Heart left ventricle (tissue), 16 donors: ENCODE measurements at regions of chr2 and their contacts with region 1.

Region 1: GRCh38 chr2:27890146-27890923 is at the starts of genes BABAM2 and RBKS:
- DNase-seq: peak; percentile 87 to 93 (median 91)
- ATAC-seq: peak; percentile 87 to 98 (median 94)
- H3K4me3 ChIP-seq: peak within 1 kb of the TSS; percentile 57 to 94 (median 80)
- H3K27ac ChIP-seq: peak within 1 kb of the TSS; percentile 85 to 99 (median 94)
- H3K4me1 ChIP-seq: peaks cover 0 to 54% (median 22%) of the 10 kb centered on the region in 12 donors
- H3K27me3 ChIP-seq: no peaks in the 10 kb centered on the region
- CTCF ChIP-seq: peak in 1 of 12 donors; percentile 9
- POLR2A ChIP-seq: peak in 1 of 2 donors; percentile 72
- total RNA-seq, gene BABAM2: 55.1 to 75.1 (median 64.4) TPM
- total RNA-seq, gene RBKS: 2.0 to 6.0 (median 4.1) TPM

Region 2: GRCh38 chr2:27421028-27421427 is 469.3 kb before region 1 on chr2:
- intact Hi-C with region 1: no loop called
- DNase-seq: no peak
- ATAC-seq: no peak
- H3K4me3 ChIP-seq: no peak overlapping the region
- H3K27ac ChIP-seq: no peak overlapping the region
- H3K4me1 ChIP-seq: no peaks in the 10 kb centered on the region
- H3K27me3 ChIP-seq: no peaks in the 10 kb centered on the region
- CTCF ChIP-seq: no peak
- POLR2A ChIP-seq: no peak

Region 3: GRCh38 chr2:27715318-27716210 is 174.8 kb before region 1 on chr2:
- intact Hi-C with region 1: loop called in 3 of 10 experiments (anchors 5 to 10 kb)
- DNase-seq: peak; percentile 84 to 90 (median 85)
- ATAC-seq: peak; percentile 78 to 90 (median 88)
- H3K4me3 ChIP-seq: peak overlapping the region; percentile 19 to 60 (median 52)
- H3K27ac ChIP-seq: peak overlapping the region; percentile 85 to 100 (median 92)
- H3K4me1 ChIP-seq: peaks cover 0 to 55% (median 24%) of the 10 kb centered on the region in 12 donors
- H3K27me3 ChIP-seq: peaks cover 0 to 8% (median 0%) of the 10 kb centered on the region in 9 donors
- CTCF ChIP-seq: no peak
- POLR2A ChIP-seq: peak; percentile 64 to 90

Region 4: DNA sequence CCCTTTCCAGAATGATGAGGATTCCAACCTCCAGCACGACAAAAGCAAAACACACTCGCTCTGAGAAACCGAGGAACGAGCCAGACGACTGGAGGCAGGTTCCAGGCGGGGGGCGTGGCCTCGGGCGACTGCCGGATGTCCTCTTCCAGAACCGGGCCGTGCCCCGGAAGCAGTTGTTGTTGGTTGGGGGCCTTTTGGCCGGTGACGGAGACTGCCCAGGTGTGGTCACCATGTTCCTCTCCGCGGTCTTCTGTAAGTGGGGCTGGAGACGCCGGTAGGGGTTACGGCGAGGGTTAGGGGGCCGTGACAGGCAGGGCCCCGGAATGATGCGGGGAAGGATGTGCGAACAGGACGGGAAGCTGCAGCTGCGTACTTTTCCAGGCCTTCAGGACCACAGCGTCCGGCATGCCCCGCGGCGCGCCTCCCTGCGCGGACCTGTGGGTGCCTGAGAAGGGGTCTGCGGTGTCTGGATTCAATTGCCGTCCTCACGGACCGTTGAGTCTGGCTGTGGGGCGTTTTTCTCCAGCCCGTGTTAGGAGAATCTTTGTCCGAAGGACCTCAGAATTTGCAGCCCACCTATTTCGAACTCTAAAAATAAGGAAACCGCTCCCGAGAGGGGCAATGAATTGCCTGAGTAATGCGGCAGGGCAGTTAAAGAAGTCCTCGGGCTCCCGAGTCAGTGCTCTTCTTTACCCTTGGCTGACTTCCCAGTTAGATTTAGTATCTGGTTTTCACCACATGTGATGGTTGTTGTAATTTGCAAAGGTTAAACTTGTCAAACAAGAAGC is 118.6 kb before region 1 on chr2 and contains the start of gene MRPL33:
- intact Hi-C with region 1: loop called in 4 of 10 experiments (anchors 1 to 10 kb)
- DNase-seq: peak; percentile 96 to 98 (median 96)
- ATAC-seq: peak; percentile 95 to 98 (median 98)
- H3K4me3 ChIP-seq: peak within 1 kb of the TSS; percentile 56 to 89 (median 76)
- H3K27ac ChIP-seq: peak within 1 kb of the TSS; percentile 88 to 97 (median 92)
- H3K4me1 ChIP-seq: peaks cover 4 to 50% (median 37%) of the 10 kb centered on the region in 12 donors
- H3K27me3 ChIP-seq: no peaks in the 10 kb centered on the region
- CTCF ChIP-seq: no peak
- POLR2A ChIP-seq: peak in 1 of 2 donors; percentile 61
- total RNA-seq, gene MRPL33: 163 to 503 (median 305) TPM

Region 5: DNA sequence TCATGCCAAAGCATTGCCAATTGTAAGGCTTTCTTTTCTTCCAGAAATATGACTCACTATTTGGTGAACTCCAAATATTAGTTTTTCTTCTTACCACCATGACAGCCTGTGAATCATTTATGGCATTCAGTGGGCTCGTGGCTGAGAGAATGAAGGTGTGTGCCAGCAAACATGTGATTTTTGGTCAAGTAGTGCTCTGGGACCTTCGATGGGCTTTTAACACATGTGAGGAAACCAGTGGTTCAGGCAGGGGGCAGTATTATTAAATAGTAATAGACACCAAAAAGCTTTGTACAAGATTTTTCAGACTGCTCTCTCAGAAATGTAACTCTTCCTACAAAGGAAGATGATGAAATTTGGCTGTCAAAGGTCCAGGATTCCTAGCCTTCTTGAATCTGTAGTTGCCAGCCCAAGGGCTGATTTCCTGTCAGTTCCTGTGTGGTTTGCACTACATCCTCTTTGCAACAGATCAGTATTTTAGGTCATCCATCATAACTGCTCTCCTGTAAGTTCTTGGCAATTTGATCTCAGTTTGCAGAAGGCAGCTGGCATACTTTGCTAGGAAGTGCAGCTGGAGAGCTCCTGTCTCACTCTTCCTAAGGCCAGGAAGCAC is 64.5 kb after region 1 on chr2:
- intact Hi-C with region 1: loop called in 2 of 10 experiments (anchors 5 kb)
- DNase-seq: peak in 4 of 5 donors; percentile 47 to 55 (median 50)
- ATAC-seq: peak; percentile 79 to 90 (median 84)
- H3K4me3 ChIP-seq: no peak overlapping the region
- H3K27ac ChIP-seq: peak overlapping the region; percentile 12 to 90 (median 58)
- H3K4me1 ChIP-seq: peaks cover 3 to 83% (median 38%) of the 10 kb centered on the region in 12 donors
- H3K27me3 ChIP-seq: no peaks in the 10 kb centered on the region
- CTCF ChIP-seq: peak in 10 of 12 donors; percentile 15 to 54 (median 46)
- POLR2A ChIP-seq: no peak

Region 6: DNA sequence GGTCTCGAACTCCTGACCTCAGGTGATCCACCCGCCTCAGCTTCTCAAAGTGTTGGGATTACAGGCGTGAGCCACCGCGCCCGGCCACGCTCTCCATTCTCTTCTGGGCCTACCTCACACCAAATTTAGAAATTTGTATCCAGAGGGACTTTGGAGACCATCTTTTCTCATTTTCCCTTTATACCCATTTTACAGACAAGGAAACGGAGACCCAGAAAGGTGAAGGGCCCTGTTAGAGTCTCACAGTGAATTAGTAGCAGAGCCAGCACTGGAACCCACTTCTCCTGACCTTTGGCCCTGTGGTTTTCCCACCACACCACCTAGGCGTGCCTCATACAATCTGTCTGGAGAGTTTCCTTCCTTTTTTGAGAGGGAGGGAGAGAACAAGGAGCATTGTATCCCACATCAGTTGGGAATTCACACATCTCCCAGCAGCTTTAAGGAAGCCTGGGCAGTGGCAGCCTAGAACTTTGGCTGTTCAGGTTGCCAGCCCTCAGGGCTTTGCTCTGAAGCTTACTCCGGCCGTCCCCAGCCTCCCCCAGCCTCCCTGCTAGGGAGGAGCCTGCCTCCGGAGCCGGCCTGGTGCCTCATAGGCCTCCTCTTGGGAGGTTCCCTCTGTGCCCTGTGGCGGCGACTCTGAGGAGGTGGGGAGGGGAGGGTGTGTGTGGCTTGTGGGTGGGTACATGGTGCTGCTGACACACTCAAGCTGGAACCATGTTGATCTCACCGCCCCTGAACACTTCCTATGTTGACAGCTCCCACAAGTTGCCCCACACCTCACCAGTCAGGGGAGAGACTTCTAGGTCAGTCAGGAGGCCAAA is 516.2 kb after region 1 on chr2:
- intact Hi-C with region 1: loop called in 1 of 10 experiments (anchors 10 kb)
- DNase-seq: peak in 4 of 5 donors; percentile 48 to 80 (median 57)
- ATAC-seq: peak in 3 of 4 donors; percentile 23 to 64 (median 27)
- H3K4me3 ChIP-seq: peak overlapping the region in 1 of 12 donors; percentile 12
- H3K27ac ChIP-seq: peak overlapping the region in 9 of 12 donors; percentile 7 to 87 (median 28)
- H3K4me1 ChIP-seq: peaks cover 0 to 98% (median 40%) of the 10 kb centered on the region in 12 donors
- H3K27me3 ChIP-seq: no peaks in the 10 kb centered on the region
- CTCF ChIP-seq: no peak
- POLR2A ChIP-seq: no peak